Vagina (tissue), 2 donors: ENCODE measurements at regions of chr9 and their contacts with region 1.

Region 1: GRCh38 chr9:121267689-121268597 is at the start of gene GSN:
- DNase-seq: no peak
- H3K4me3 ChIP-seq: peak within 1 kb of the TSS; percentile 78 to 87
- H3K27ac ChIP-seq: peak within 1 kb of the TSS; percentile 97
- H3K4me1 ChIP-seq: peaks cover 59% of the 10 kb centered on the region
- H3K27me3 ChIP-seq: no peaks in the 10 kb centered on the region
- CTCF ChIP-seq: no peak
- POLR2A ChIP-seq: peak in 1 of 2 donors; percentile 76
- total RNA-seq, gene GSN: 2,053 TPM

Region 2: DNA sequence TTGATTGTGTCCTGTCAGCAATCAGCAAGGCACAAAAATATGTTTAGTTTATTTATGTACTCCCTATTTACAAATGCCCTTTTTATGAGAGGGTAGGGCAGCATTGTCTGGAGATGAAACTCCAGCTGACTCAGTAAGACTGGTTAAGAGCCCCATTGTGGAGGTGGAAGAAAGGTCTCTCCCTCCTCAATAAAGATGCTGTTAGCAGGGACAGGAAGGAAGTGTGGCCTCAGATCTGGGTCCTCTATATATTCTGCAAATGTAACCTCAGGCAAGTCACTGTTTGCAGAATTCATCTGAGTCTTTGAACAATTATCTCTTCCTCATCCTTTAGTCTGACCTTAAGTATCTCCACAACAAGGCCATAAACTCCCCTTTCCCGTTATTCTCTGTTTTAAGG is 293.0 kb before region 1 on chr9:
- intact Hi-C with region 1: no loop called
- DNase-seq: no peak
- H3K4me3 ChIP-seq: no peak overlapping the region
- H3K27ac ChIP-seq: no peak overlapping the region
- H3K4me1 ChIP-seq: no peaks in the 10 kb centered on the region
- H3K27me3 ChIP-seq: no peaks in the 10 kb centered on the region
- CTCF ChIP-seq: no peak
- POLR2A ChIP-seq: no peak

Region 3: GRCh38 chr9:121233906-121234901 is 33.7 kb before region 1 on chr9:
- intact Hi-C with region 1: no loop called
- DNase-seq: no peak
- H3K4me3 ChIP-seq: no peak overlapping the region
- H3K27ac ChIP-seq: no peak overlapping the region
- H3K4me1 ChIP-seq: no peaks in the 10 kb centered on the region
- H3K27me3 ChIP-seq: no peaks in the 10 kb centered on the region
- CTCF ChIP-seq: no peak
- POLR2A ChIP-seq: no peak

Region 4: DNA sequence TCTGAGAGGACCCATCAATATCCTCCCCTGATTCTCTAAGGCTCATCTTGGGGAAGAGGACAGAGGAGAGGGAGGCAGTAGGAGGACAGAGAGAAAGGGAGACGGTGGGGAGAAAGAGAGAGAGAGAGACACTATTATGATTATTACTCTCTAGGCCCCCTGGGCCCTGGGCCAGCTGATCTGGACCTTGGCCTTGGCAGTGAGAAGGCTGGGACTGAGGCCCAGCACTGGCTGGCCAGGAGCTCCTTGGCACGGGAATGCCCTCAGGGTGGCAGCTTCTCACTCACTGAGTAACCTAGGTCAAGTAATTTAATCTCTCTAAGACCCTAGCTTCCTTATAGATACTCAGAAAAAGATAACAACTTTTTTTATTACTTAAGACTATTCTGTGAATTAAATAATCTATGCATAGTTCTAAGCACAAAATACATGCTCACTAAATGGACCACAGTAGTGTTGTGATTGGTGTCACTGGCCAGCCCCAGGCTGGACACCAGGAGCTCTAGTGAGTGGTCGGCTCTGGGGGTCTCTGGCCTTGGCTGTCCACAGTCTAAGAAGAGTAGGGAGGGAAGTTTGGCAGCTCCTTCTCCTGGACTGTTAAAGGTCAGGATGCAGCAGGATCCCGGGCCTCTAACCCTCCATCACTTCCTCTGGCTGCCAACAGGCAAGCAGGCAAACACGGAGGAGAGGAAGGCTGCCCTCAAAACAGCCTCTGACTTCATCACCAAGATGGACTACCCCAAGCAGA is 50.0 kb after region 1 on chr9:
- intact Hi-C with region 1: loop called (anchors 5 kb)
- DNase-seq: no peak
- H3K4me3 ChIP-seq: no peak overlapping the region
- H3K27ac ChIP-seq: peak overlapping the region; percentile 98
- H3K4me1 ChIP-seq: peaks cover 48% of the 10 kb centered on the region
- H3K27me3 ChIP-seq: no peaks in the 10 kb centered on the region
- CTCF ChIP-seq: no peak
- POLR2A ChIP-seq: no peak

Region 5: DNA sequence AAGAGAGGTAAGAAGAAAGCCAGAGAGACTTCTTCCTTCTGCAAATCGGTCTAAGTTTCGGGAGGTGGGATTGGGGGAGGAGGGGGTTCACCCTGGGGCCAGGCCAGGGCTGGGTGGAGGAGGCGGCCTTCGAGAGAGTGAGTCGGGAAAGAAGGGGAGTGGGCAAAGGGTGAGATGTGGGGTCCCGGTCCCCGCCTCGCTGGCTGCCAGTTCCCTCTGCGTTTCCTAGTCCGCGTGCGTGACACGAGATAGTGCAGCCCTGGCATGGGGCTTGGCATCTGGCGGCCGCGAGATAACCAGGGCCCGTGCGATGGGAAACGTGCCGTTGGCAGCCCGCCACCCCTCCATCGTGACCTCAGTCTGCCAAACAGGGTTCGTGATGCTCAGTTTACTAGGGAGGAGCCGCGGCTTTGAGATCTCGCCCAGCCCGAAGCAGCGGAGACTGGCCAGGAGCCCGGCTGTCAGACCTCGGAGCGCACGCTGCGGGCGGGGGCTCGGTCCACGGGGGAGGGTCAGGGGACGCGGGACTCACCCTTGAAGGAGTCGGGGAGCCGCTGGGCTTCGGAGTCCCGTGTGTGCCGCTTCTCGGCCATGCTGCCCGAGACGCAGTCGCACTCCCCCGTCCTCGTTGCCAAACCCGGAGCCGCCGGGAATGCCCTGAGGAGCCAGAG is 101.8 kb after region 1 on chr9 and contains the start of gene STOM:
- intact Hi-C with region 1: loop called (anchors 5 kb)
- DNase-seq: peak in 1 of 2 donors; percentile 93
- H3K4me3 ChIP-seq: peak within 1 kb of the TSS; percentile 74 to 75
- H3K27ac ChIP-seq: peak within 1 kb of the TSS; percentile 97
- H3K4me1 ChIP-seq: peaks cover 75% of the 10 kb centered on the region
- H3K27me3 ChIP-seq: no peaks in the 10 kb centered on the region
- CTCF ChIP-seq: no peak
- POLR2A ChIP-seq: peak; percentile 64 to 98
- total RNA-seq, gene STOM: 263 TPM

Region 6: DNA sequence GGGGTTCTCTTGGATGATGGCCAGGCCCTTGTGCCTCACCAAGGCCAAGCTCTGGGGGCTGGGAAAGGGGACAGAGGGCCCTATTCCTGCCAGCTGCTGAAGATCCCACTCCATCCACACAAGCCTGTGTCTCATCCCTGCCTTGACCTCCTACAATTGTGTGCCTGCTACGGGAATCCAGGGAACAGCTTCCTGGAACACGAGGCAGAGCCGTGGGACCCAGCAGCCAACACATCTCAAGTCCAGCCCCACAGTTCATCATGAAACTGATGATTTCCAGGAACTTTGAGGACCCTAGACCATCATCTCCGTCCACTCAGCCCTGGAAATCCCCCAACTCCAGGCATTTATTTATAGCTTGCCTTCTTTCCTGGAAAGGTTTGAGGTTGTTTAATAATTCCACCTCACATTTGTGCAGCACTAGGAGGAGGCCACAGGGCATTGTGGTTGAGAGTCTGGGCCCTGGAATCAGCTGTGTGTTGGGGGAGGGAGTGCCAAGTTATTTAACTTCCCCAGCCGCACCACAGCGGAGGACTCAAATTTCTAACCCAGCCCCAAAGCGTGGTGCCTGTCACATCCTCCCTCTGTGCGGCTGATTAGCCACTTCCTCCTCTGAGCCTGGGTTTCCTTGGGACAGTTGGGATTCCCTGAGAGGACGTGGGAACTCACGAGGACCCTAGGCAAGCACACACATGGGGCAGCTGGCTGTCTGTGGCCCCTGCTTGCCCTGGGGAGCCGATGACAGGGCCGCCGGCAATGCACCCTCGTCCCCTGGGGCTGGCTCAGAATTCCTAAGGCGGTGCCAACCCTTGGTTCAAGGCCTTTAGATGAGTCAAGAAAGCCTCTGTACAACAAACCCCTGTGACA is 289.9 kb after region 1 on chr9:
- intact Hi-C with region 1: no loop called
- DNase-seq: no peak
- H3K4me3 ChIP-seq: no peak overlapping the region
- H3K27ac ChIP-seq: peak overlapping the region; percentile 36
- H3K4me1 ChIP-seq: peaks cover 29% of the 10 kb centered on the region
- H3K27me3 ChIP-seq: no peaks in the 10 kb centered on the region
- CTCF ChIP-seq: no peak
- POLR2A ChIP-seq: no peak